PC-3 (cell line): ENCODE measurements at regions of chr3 and their contacts with region 1.

Region 1: GRCh38 chr3:43690400-43691119 is at the start of gene ABHD5:
- DNase-seq: peak; percentile 98
- ATAC-seq: peak; percentile 78
- H3K4me3 ChIP-seq: peak within 1 kb of the TSS; percentile 86
- H3K27ac ChIP-seq: peak within 1 kb of the TSS; percentile 53
- H3K4me1 ChIP-seq: peaks cover 39% of the 10 kb centered on the region
- H3K27me3 ChIP-seq: no peaks in the 10 kb centered on the region
- CTCF ChIP-seq: peak; percentile 34; the same call in 1 of the 2 replicates
- total RNA-seq, gene ABHD5: 27.1 and 29.5 TPM in 2 replicates

Region 2: GRCh38 chr3:43194490-43195114 is 496.0 kb before region 1 on chr3:
- CTCF ChIA-PET with region 1: no interaction called
- POLR2A ChIA-PET with region 1: no interaction called
- intact Hi-C with region 1: no loop called
- DNase-seq: no peak
- ATAC-seq: no peak
- H3K4me3 ChIP-seq: no peak overlapping the region
- H3K27ac ChIP-seq: no peak overlapping the region
- H3K4me1 ChIP-seq: peaks cover 34% of the 10 kb centered on the region
- H3K27me3 ChIP-seq: no peaks in the 10 kb centered on the region
- CTCF ChIP-seq: no peak

Region 3: DNA sequence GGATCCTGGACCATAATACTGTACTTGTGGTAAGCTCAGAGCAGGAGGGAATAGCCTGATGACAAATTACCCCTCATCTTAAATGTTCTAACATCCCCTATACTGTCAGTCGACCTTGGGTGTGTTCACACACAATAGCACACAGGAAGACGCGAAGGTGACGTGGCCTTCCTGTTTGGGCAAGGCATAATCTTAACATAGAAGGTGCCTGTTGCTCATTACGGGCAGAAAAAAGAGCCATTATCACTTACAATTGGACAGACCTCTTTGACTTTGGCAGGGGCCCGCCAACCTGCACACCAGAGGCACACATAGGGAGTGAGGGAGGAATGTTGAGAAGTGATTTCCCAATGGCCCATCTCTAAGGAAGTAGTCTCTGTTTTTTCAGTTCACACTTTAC is 213.0 kb before region 1 on chr3:
- CTCF ChIA-PET with region 1: no interaction called
- POLR2A ChIA-PET with region 1: no interaction called
- intact Hi-C with region 1: no loop called
- DNase-seq: no peak
- ATAC-seq: no peak
- H3K4me3 ChIP-seq: no peak overlapping the region
- H3K27ac ChIP-seq: no peak overlapping the region
- H3K4me1 ChIP-seq: no peaks in the 10 kb centered on the region
- H3K27me3 ChIP-seq: no peaks in the 10 kb centered on the region
- CTCF ChIP-seq: no peak

Region 4: DNA sequence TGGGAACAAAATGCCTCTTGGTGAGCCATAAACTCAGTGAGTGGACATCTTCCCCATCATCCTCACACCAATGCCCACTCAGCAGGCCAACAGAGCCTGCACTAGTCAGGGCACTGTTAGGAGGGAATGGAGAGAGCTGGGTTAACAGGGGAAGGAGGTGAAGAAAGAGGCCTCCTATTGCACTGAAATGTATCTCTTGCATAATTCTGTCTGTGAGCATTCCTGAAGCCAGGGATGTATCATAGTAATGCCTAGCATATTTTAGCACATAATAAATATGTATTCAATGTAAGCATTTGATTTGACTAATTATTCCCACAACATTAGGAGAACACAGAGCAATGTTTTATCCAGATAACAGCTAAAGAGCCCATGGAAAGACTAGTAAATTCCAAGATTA is 149.9 kb before region 1 on chr3:
- CTCF ChIA-PET with region 1: no interaction called
- POLR2A ChIA-PET with region 1: no interaction called
- intact Hi-C with region 1: loop called (anchors 2 kb)
- DNase-seq: no peak
- ATAC-seq: no peak
- H3K4me3 ChIP-seq: no peak overlapping the region
- H3K27ac ChIP-seq: no peak overlapping the region
- H3K4me1 ChIP-seq: no peaks in the 10 kb centered on the region
- H3K27me3 ChIP-seq: no peaks in the 10 kb centered on the region
- CTCF ChIP-seq: no peak

Region 5: DNA sequence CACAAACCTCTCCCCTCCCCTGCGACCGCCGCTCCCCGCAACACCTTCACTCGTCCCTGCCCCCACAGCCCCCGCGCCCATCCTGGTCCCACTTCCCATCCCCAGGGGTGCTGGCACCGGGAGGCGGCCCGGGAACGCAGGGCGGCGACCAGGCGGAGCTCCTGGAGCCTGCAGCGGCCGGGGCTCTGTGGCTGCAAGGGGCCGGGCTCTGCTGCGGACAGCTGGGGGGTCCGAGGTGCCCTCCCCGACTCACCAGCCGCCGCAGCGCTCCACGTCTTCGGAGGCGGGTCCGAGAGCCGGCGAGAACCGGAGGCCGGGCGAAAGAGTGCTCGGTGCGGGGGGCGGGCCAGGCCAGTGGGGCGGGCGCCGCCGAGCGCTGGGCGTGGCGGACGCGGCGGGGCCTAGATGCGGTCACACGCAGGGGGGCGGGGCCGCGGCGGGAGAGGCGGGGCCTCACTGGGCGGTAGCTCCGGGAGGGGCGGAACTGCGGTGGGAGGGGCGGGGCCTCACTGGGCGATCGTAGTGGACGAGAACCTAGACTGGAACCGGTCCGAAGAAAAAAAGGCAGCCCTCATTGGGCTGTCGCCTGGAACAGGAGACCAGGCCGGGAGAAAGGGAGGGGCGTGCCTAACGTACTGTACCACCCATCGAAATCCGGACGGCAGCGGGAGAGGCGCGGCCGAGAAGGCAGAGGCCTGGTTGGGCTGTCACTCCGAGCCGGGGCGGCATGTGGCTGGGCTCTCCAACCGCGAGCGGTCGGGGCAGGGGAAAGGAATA is 68.7 kb before region 1 on chr3 and contains the start of gene ANO10:
- CTCF ChIA-PET with region 1: no interaction called
- POLR2A ChIA-PET with region 1: no interaction called
- intact Hi-C with region 1: loop called (anchors 1 kb)
- DNase-seq: peak; percentile 99
- ATAC-seq: peak; percentile 95
- H3K4me3 ChIP-seq: peak within 1 kb of the TSS; percentile 98
- H3K27ac ChIP-seq: peak within 1 kb of the TSS; percentile 54
- H3K4me1 ChIP-seq: peaks cover 14% of the 10 kb centered on the region
- H3K27me3 ChIP-seq: no peaks in the 10 kb centered on the region
- CTCF ChIP-seq: no peak
- total RNA-seq, gene ANO10: 23.7 and 28.3 TPM in 2 replicates

Region 6: GRCh38 chr3:43649365-43649968 is 41.1 kb before region 1 on chr3:
- CTCF ChIA-PET with region 1: no interaction called
- POLR2A ChIA-PET with region 1: no interaction called
- intact Hi-C with region 1: no loop called
- DNase-seq: no peak
- ATAC-seq: no peak
- H3K4me3 ChIP-seq: no peak overlapping the region
- H3K27ac ChIP-seq: no peak overlapping the region
- H3K4me1 ChIP-seq: no peaks in the 10 kb centered on the region; the same call in 1 of the 2 replicates
- H3K27me3 ChIP-seq: no peaks in the 10 kb centered on the region
- CTCF ChIP-seq: no peak

Region 7: GRCh38 chr3:43676441-43676840 is 14.1 kb before region 1 on chr3:
- CTCF ChIA-PET with region 1: no interaction called
- POLR2A ChIA-PET with region 1: interaction called, 22 read pairs
- intact Hi-C with region 1: no loop called
- DNase-seq: no peak
- ATAC-seq: no peak
- H3K4me3 ChIP-seq: no peak overlapping the region
- H3K27ac ChIP-seq: no peak overlapping the region
- H3K4me1 ChIP-seq: no peaks in the 10 kb centered on the region
- H3K27me3 ChIP-seq: no peaks in the 10 kb centered on the region
- CTCF ChIP-seq: no peak

Region 8: DNA sequence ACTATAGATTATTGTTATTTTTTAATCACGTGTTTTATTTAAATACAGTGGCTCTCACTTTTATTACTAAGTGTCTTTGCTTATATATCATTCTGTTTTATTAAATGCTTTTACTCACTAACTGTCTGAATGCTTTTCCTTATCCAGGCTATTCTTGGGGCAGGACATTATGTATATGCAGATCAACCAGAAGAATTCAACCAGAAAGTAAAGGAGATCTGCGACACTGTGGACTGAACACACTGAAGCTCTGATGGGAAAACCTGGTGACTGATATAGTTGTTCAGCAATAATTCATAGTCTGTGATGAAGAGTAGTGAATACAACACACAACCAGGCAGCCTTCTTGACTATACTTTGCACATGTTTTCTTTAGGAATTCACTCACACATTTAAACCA is 27.7 kb after region 1 on chr3:
- CTCF ChIA-PET with region 1: no interaction called
- POLR2A ChIA-PET with region 1: no interaction called
- intact Hi-C with region 1: no loop called
- DNase-seq: no peak
- ATAC-seq: no peak
- H3K4me3 ChIP-seq: no peak overlapping the region
- H3K27ac ChIP-seq: no peak overlapping the region
- H3K4me1 ChIP-seq: peaks cover 13% of the 10 kb centered on the region
- H3K27me3 ChIP-seq: no peaks in the 10 kb centered on the region
- CTCF ChIP-seq: no peak

Region 9: GRCh38 chr3:43769471-43770425 is 79.2 kb after region 1 on chr3:
- CTCF ChIA-PET with region 1: no interaction called
- POLR2A ChIA-PET with region 1: no interaction called
- intact Hi-C with region 1: loop called (anchors 5 kb)
- DNase-seq: peak; percentile 99
- ATAC-seq: peak; percentile 96
- H3K4me3 ChIP-seq: peak overlapping the region; percentile 41
- H3K27ac ChIP-seq: peak overlapping the region; percentile 5; the same call in 1 of the 2 replicates
- H3K4me1 ChIP-seq: peaks cover 63% of the 10 kb centered on the region
- H3K27me3 ChIP-seq: no peaks in the 10 kb centered on the region
- CTCF ChIP-seq: peak; percentile 93